ENCODE measurements at regions of chr1 and their contacts with region 1.

Region 1: GRCh38 chr1:40625066-40625465 is 40.4 kb downstream of the RIMS3 start:
- DNase-seq: peak; percentile 66
- H3K4me3 Mint-ChIP-seq: no peak overlapping the region
- H3K27ac Mint-ChIP-seq: no peak overlapping the region
- H3K4me1 Mint-ChIP-seq: no peaks in the 10 kb centered on the region
- H3K27me3 Mint-ChIP-seq: peaks cover 66% of the 10 kb centered on the region
- CTCF ChIP-seq: peak; percentile 33

Region 2: GRCh38 chr1:40449684-40450494 is 175.2 kb before region 1 on chr1 and contains the start of gene ZFP69B:
- CTCF ChIA-PET with region 1: no interaction called
- intact Hi-C with region 1: no loop called
- DNase-seq: peak; percentile 96
- H3K4me3 Mint-ChIP-seq: peak within 1 kb of the TSS; percentile 86
- H3K27ac Mint-ChIP-seq: peak within 1 kb of the TSS; percentile 73
- H3K4me1 Mint-ChIP-seq: peaks cover 13% of the 10 kb centered on the region
- H3K27me3 Mint-ChIP-seq: no peaks in the 10 kb centered on the region
- CTCF ChIP-seq: no peak
- total RNA-seq, gene ZFP69B: 4.5 and 5.1 TPM in 2 replicates

Region 3: GRCh38 chr1:40668769-40669525 is 43.9 kb after region 1 on chr1:
- CTCF ChIA-PET with region 1: interaction called, 12 read pairs
- intact Hi-C with region 1: loop called (anchors 2 kb)
- DNase-seq: peak; percentile 89
- H3K4me3 Mint-ChIP-seq: peak overlapping the region; percentile 52
- H3K27ac Mint-ChIP-seq: no peak overlapping the region
- H3K4me1 Mint-ChIP-seq: peaks cover 10% of the 10 kb centered on the region
- H3K27me3 Mint-ChIP-seq: peaks cover 25% of the 10 kb centered on the region
- CTCF ChIP-seq: peak; percentile 83